Dendritic cell treated with granulocyte-macrophage colony-stimulating factor and Interleukin-4, amounts not matched to agents 40 ng/mL and 50 ng/mL, for 4 days (primary cell): ENCODE measurements at regions of chr1 and their contacts with region 1.

Region 1: GRCh38 chr1:203381151-203381751 is 30.3 kb upstream of the FMOD start:
- H3K4me3 Mint-ChIP-seq: no peak overlapping the region
- H3K27ac Mint-ChIP-seq: peak overlapping the region; percentile 57
- H3K4me1 Mint-ChIP-seq: peaks cover 40% of the 10 kb centered on the region
- H3K27me3 Mint-ChIP-seq: peaks cover 14% of the 10 kb centered on the region

Region 2: DNA sequence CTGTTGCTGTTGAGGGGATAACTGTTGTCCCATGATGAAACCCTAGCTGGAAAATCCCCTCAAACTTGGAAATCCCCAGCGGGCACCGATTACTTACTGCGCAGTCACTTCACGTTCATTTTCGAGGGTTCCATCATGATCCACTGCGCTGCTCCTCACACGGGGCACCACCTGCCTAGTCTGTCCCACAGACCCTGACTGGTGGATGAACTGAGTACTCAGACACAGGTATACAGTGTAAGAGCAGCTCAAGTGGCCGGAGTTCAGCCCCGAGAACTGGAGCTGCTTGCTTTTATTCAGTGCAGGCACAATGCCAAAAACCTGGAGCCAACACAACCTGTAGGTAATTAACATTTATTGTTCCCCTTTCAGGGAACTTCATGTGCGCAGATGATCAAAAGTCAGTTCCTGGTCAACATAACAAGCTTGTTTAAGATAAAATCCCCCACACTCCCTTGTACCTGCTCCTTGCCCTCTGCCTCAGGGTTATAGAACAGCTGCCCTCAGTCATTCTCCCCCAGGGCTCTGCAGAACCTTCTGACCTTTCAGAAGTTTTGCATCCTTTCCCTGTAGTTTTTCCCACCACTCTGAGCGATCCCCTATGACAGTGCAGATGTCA is 47.8 kb after region 1 on chr1:
- intact Hi-C with region 1: loop called (anchors 5 kb)
- H3K4me3 Mint-ChIP-seq: no peak overlapping the region
- H3K27ac Mint-ChIP-seq: no peak overlapping the region
- H3K4me1 Mint-ChIP-seq: peaks cover 23% of the 10 kb centered on the region
- H3K27me3 Mint-ChIP-seq: peaks cover 54% of the 10 kb centered on the region

Region 3: DNA sequence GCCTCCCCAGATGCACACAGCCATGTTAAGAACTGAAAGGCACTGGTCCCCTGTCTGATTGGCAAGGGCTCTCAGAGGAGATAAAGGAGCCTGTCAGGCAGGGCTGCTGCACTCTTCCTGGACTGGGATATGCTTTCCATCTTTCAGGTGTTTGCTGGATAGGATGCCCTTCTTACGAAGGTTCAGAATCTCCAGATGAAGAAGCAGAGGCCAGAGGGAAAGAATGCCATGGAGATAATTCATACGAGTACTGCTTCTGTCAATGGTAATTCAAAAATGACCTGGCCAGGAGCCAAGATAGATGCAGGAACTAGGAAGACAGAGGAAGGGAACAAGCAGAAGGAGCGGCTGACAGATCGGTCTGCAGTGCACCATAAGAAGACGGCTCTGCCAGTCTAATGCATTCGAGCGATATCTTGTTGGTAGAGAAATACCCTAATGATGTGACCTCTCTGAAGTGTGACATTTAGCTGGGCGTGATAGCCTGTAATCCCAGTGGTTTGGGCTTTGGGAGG is 228.8 kb after region 1 on chr1:
- intact Hi-C with region 1: no loop called
- H3K4me3 Mint-ChIP-seq: no peak overlapping the region
- H3K27ac Mint-ChIP-seq: no peak overlapping the region
- H3K4me1 Mint-ChIP-seq: peaks cover 30% of the 10 kb centered on the region
- H3K27me3 Mint-ChIP-seq: peaks cover 9% of the 10 kb centered on the region